ENCODE measurements at regions of chr20 and their contacts with region 1.

Region 1: GRCh38 chr20:21571841-21572690 is 58.2 kb upstream of the NKX2-2 start:
- DNase-seq: no peak
- ATAC-seq: peak; percentile 25; the same call in 1 of the 2 replicates
- H3K4me3 ChIP-seq: no peak overlapping the region
- H3K27ac ChIP-seq: no peak overlapping the region
- H3K4me1 ChIP-seq: no peaks in the 10 kb centered on the region
- H3K27me3 ChIP-seq: peaks cover 24% of the 10 kb centered on the region
- CTCF ChIP-seq: peak; percentile 54 to 92 (median 77); a peak in 5 of 6 replicates
- POLR2A ChIP-seq: no peak
- RAD21 ChIP-seq: peak; percentile 68

Region 2: GRCh38 chr20:20860078-20860806 is 711.8 kb before region 1 on chr20:
- CTCF ChIA-PET with region 1: no interaction called
- POLR2A ChIA-PET with region 1: no interaction called
- RAD21 ChIA-PET with region 1: no interaction called
- intact Hi-C with region 1: loop called (anchors 5 kb)
- DNase-seq: peak; percentile 69
- ATAC-seq: peak; percentile 96
- H3K4me3 ChIP-seq: no peak overlapping the region
- H3K27ac ChIP-seq: no peak overlapping the region
- H3K4me1 ChIP-seq: no peaks in the 10 kb centered on the region
- H3K27me3 ChIP-seq: no peaks in the 10 kb centered on the region
- CTCF ChIP-seq: peak; percentile 80 to 99 (median 94)
- POLR2A ChIP-seq: no peak
- RAD21 ChIP-seq: peak; percentile 74

Region 3: DNA sequence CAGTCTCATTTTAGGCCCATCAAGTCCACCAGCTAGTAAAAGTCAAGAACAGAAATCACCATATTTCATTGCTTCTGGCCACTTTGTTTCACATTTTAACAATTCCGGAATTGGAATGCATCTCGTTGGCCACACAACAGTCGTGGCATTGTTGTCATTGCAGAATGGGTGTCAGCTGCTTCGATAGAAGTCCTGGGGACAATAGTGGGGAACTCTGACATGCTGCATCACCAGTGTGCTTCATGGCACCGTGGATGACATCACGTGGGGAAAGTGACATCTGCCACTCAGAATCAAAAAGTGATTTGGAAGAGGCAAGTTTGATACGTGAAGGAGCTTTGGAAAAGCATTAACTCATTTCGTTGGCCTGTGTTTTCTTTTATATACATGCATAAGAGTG is 312.7 kb before region 1 on chr20:
- CTCF ChIA-PET with region 1: no interaction called
- POLR2A ChIA-PET with region 1: no interaction called
- RAD21 ChIA-PET with region 1: no interaction called
- intact Hi-C with region 1: no loop called
- DNase-seq: no peak
- ATAC-seq: no peak
- H3K4me3 ChIP-seq: no peak overlapping the region
- H3K27ac ChIP-seq: no peak overlapping the region
- H3K4me1 ChIP-seq: no peaks in the 10 kb centered on the region
- H3K27me3 ChIP-seq: no peaks in the 10 kb centered on the region
- CTCF ChIP-seq: no peak
- POLR2A ChIP-seq: no peak
- RAD21 ChIP-seq: no peak

Region 4: GRCh38 chr20:21529863-21530262 is 42.2 kb before region 1 on chr20:
- CTCF ChIA-PET with region 1: interaction called, 4 read pairs
- POLR2A ChIA-PET with region 1: no interaction called
- RAD21 ChIA-PET with region 1: no interaction called
- intact Hi-C with region 1: loop called (anchors 5 kb)
- DNase-seq: peak; percentile 38
- ATAC-seq: peak; percentile 81
- H3K4me3 ChIP-seq: no peak overlapping the region
- H3K27ac ChIP-seq: no peak overlapping the region
- H3K4me1 ChIP-seq: peaks cover 0 to 4% of the 10 kb centered on the region in 2 experiments; a peak in 1 of 4 replicates
- H3K27me3 ChIP-seq: peaks cover 19% of the 10 kb centered on the region; the same call in 1 of the 2 replicates
- CTCF ChIP-seq: peak in 2 of 3 experiments; percentile 58 to 65; a peak in 4 of 6 replicates
- POLR2A ChIP-seq: no peak
- RAD21 ChIP-seq: peak; percentile 28; the same call in 1 of the 2 replicates

Measured in HCT116 (cell line).